Brain microvascular endothelial cell (primary cell): ENCODE measurements at regions of chr6 and their contacts with region 1.

Region 1: DNA sequence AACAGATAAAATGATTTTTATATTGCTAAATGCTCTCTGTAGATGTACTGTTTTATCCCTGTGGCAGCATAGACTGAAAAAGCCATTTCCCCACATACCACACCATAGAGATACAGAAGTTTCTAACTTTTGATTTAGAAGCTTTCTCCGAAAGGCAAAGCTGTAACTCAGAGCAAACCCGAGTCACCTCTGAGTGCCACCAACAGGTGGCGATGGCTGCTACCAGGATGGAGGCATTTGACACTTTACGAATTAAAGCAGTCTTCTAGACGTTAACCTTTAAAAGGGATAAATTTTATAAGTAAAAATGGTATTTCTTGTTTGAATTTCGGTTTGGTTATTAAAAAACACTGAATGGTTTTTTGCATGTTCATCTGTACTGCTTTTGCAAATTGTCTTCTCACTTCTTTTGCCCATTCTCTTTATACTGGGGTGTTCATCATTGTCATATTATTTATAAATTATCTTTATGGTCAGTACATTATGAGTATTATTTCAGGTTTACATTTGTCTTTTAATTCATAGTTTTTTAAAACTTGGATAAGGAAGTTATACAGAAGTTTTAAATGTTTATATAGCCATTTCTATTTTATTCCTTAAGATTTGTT is 201.0 kb upstream of the CEP162 start:
- DNase-seq: peak; percentile 60
- H3K4me3 ChIP-seq: no peak overlapping the region
- H3K27ac ChIP-seq: no peak overlapping the region
- H3K27me3 ChIP-seq: no peaks in the 10 kb centered on the region
- CTCF ChIP-seq: peak; percentile 93

Region 2: GRCh38 chr6:84597238-84597875 is 169.0 kb after region 1 on chr6:
- in situ Hi-C with region 1: no loop called
- DNase-seq: peak; percentile 41
- H3K4me3 ChIP-seq: no peak overlapping the region
- H3K27ac ChIP-seq: peak overlapping the region; percentile 3
- H3K27me3 ChIP-seq: no peaks in the 10 kb centered on the region
- CTCF ChIP-seq: no peak

Region 3: DNA sequence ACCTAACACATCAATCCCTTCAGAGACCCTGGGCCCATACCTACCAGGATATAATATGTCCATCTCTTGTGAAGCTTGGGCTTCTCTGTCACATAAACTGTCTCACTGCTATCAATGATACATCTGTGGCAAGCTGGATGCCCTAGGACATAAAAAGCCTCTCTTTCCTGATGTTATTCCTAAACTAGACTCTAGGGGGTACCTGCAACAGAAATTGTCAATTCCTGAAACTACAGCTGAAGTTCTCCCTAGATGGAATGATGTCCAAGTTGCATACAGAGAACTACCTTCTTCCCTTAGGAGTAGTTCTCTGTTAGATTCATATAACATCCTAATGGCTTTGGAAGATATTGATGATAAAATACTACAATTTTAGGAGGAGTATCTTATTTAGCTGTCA is 300.2 kb after region 1 on chr6:
- in situ Hi-C with region 1: loop called (anchors 25 kb)
- DNase-seq: peak; percentile 14
- H3K4me3 ChIP-seq: no peak overlapping the region
- H3K27ac ChIP-seq: no peak overlapping the region
- H3K27me3 ChIP-seq: no peaks in the 10 kb centered on the region
- CTCF ChIP-seq: peak; percentile 45